ENCODE measurements at regions of chr12 and their contacts with region 1.

Region 1: GRCh38 chr12:97177481-97177880 is 270.4 kb downstream of the NEDD1 start:
- DNase-seq: no peak
- ATAC-seq: no peak
- H3K4me3 ChIP-seq: no peak overlapping the region
- H3K27ac ChIP-seq: no peak overlapping the region
- H3K4me1 ChIP-seq: no peaks in the 10 kb centered on the region
- H3K27me3 ChIP-seq: no peaks in the 10 kb centered on the region

Region 2: GRCh38 chr12:97038834-97039233 is 138.6 kb before region 1 on chr12:
- intact Hi-C with region 1: loop called in 1 of 4 experiments (anchors 5 kb)
- DNase-seq: no peak
- ATAC-seq: no peak
- H3K4me3 ChIP-seq: no peak overlapping the region
- H3K27ac ChIP-seq: no peak overlapping the region
- H3K4me1 ChIP-seq: no peaks in the 10 kb centered on the region
- H3K27me3 ChIP-seq: no peaks in the 10 kb centered on the region

Measured in right cardiac atrium (tissue), 5 donors.